BJ (cell line): ENCODE measurements at regions of chr11 and their contacts with region 1.

Region 1: DNA sequence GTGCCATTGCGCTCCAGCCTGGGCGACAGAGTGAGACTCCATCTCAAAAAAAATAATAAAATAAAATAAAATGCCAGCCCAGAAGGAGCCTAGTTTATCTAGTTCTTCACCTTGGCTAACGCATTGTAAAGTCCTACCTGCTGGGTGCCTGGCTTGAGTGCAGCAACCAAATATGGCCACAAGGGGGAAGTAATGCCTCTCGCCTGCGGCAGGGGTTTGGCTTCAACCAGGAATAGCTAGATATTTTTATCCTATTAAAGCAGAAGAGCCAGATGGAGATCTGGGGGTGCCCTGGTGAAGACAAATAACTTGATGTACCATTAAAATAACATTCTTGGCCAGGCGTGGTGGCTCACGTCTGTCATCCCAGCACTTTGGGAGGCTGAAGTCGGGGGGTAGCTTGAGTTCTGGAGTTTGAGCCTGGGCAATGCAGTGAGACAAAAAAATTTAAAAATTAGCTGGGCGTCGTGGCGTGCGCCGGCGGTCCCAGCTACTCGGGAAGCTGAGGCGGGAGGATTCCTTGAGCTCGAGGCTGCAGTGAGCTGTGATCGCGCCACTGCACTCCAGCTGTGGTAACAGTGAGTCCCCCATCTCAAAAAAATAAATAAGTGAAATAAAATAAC is 20.6 kb upstream of the PLEKHB1 start:
- DNase-seq: peak; percentile 16
- H3K4me3 ChIP-seq: 0 out of 2 replicates have a peak overlapping the region, but pooled peaks have one; percentile 11
- H3K27me3 ChIP-seq: peaks cover 9% of the 10 kb centered on the region
- CTCF ChIP-seq: peak; percentile 92

Region 2: GRCh38 chr11:73597956-73598718 is 27.7 kb before region 1 on chr11 and contains the start of gene FAM168A:
- CTCF ChIA-PET with region 1: interaction called, 19 read pairs
- POLR2A ChIA-PET with region 1: no interaction called
- DNase-seq: peak; percentile 85
- H3K4me3 ChIP-seq: peak within 1 kb of the TSS; percentile 96
- H3K27me3 ChIP-seq: no peaks in the 10 kb centered on the region
- CTCF ChIP-seq: no peak; the same call in 1 of the 2 replicates
- polyA plus RNA-seq, gene FAM168A: 18.0 and 19.1 TPM in 2 replicates

Region 3: GRCh38 chr11:73612601-73613140 is 13.1 kb before region 1 on chr11:
- CTCF ChIA-PET with region 1: interaction called, 17 read pairs
- POLR2A ChIA-PET with region 1: no interaction called
- DNase-seq: no peak
- H3K4me3 ChIP-seq: no peak overlapping the region
- H3K27me3 ChIP-seq: peaks cover 2% of the 10 kb centered on the region; the same call in 1 of the 2 replicates
- CTCF ChIP-seq: no peak

Region 4: GRCh38 chr11:73640592-73640991 is 14.8 kb after region 1 on chr11:
- CTCF ChIA-PET with region 1: interaction called, 12 read pairs
- POLR2A ChIA-PET with region 1: no interaction called
- DNase-seq: no peak
- H3K4me3 ChIP-seq: no peak overlapping the region
- H3K27me3 ChIP-seq: 0 out of 2 replicates have a peak, but pooled peaks cover 3% of the 10 kb centered on the region
- CTCF ChIP-seq: no peak

Region 5: DNA sequence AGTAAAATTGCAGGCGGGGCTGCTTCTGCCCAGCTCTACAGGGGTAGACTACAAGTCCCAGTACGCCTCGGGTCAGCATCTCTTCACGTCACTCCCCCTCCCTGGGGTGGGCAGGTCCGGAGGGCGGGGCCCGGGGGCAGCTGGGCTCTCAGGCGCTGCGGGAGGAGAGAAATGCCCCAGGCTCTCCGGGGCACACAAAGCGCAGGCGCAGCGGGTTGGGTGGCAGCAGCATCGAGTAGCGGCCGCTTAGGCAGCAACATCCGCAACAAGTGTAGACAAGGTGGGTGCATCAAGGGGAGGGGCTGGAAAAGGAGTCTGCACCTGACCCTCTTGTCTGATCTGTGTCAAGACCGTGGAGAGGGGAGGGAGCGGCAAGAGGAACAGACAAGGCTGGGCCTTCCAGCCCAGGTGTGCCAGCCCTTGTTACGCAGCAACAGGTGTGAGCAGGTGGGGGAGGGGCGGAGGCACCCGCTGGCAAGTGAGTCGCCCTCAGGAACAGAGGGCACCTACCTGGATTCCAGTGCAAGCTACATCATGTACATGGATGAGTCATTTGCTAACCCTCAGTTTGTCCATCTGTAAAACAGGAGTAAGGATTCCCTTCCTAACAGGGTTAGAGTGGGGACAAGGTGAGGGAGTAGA is 21.8 kb after region 1 on chr11:
- CTCF ChIA-PET with region 1: interaction called, 15 read pairs
- POLR2A ChIA-PET with region 1: no interaction called
- DNase-seq: peak; percentile 30
- H3K4me3 ChIP-seq: peak overlapping the region; percentile 9; the same call in 1 of the 2 replicates
- H3K27me3 ChIP-seq: peaks cover 15% of the 10 kb centered on the region
- CTCF ChIP-seq: no peak

Region 6: GRCh38 chr11:73931039-73931645 is 305.3 kb after region 1 on chr11:
- CTCF ChIA-PET with region 1: interaction called, 22 read pairs
- POLR2A ChIA-PET with region 1: no interaction called
- DNase-seq: no peak
- H3K4me3 ChIP-seq: no peak overlapping the region
- H3K27me3 ChIP-seq: no peaks in the 10 kb centered on the region
- CTCF ChIP-seq: peak; percentile 56